Activated B cell treated with CpG ODN at 0.5 μM for 24 hours (primary cell): ENCODE measurements at regions of chr6 and their contacts with region 1.

Region 1: DNA sequence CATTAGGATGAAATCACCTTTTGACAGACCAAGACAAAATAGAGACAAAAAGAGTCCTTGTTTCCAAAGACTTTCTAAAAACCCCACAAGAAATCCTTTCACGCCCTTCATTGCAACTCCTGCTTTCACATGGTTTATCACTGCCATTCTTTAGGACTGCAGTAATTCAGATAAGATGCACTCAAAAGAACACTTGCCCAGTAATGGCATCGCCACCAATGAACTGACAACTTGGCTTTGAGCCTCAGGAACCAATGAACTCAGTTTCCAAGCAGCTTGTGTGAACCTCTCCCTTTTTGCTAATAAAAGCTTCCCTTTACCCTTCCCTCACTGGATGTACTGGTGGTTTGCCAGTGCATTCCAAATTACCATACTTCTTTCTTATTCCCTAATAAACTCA is 21.8 kb downstream of the OSTM1 start:
- DNase-seq: no peak
- ATAC-seq: no peak
- H3K4me3 Mint-ChIP-seq: no peak overlapping the region
- H3K27ac Mint-ChIP-seq: no peak overlapping the region
- H3K4me1 Mint-ChIP-seq: no peaks in the 10 kb centered on the region
- H3K27me3 Mint-ChIP-seq: no peaks in the 10 kb centered on the region
- CTCF ChIP-seq: no peak

Region 2: DNA sequence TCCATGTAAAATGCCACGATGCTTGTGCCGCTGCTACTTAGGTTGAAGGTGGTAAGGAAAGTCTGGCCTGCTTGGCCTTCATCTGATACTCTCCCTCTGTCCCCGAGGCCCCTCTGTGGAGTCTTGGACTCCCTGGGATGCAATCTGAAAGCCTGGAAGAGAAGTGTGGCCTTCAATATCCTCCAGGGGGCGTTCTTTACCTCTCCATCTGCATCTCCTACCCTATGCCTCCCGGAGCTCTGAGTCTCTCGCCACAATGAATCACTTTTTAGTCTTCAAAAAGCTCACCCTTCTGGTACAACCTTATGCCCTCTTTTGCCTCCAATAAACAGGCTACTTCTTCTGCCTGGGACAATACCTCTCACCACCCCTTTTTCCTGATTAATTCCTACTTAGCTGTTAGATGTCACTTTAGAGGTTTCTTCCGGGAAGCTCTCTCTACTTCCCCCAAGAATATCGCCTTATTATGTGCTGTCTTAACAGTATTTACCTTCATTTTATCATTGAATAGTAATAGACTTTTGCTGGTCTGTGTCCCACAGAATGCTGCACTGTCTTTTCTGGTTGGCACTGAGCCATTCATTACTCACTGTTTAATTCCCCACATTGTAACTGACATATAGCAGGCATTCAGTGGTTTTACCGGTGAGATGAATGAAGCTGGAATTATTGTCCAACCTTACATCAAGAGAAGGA is 1713.2 kb before region 1 on chr6:
- CTCF ChIA-PET with region 1: interaction called, 5 read pairs
- POLR2A ChIA-PET with region 1: no interaction called
- intact Hi-C with region 1: loop called (anchors 10 kb)
- DNase-seq: no peak
- ATAC-seq: peak; percentile 79
- H3K4me3 Mint-ChIP-seq: peak overlapping the region; percentile 59
- H3K27ac Mint-ChIP-seq: no peak overlapping the region
- H3K4me1 Mint-ChIP-seq: peaks cover 7% of the 10 kb centered on the region
- H3K27me3 Mint-ChIP-seq: peaks cover 17% of the 10 kb centered on the region
- CTCF ChIP-seq: no peak

Region 3: GRCh38 chr6:107132330-107132954 is 920.3 kb before region 1 on chr6:
- CTCF ChIA-PET with region 1: interaction called, 3 read pairs
- POLR2A ChIA-PET with region 1: no interaction called
- intact Hi-C with region 1: loop called (anchors 1 kb)
- DNase-seq: no peak
- ATAC-seq: no peak
- H3K4me3 Mint-ChIP-seq: no peak overlapping the region
- H3K27ac Mint-ChIP-seq: no peak overlapping the region
- H3K4me1 Mint-ChIP-seq: peaks cover 3% of the 10 kb centered on the region
- H3K27me3 Mint-ChIP-seq: no peaks in the 10 kb centered on the region
- CTCF ChIP-seq: no peak

Region 4: DNA sequence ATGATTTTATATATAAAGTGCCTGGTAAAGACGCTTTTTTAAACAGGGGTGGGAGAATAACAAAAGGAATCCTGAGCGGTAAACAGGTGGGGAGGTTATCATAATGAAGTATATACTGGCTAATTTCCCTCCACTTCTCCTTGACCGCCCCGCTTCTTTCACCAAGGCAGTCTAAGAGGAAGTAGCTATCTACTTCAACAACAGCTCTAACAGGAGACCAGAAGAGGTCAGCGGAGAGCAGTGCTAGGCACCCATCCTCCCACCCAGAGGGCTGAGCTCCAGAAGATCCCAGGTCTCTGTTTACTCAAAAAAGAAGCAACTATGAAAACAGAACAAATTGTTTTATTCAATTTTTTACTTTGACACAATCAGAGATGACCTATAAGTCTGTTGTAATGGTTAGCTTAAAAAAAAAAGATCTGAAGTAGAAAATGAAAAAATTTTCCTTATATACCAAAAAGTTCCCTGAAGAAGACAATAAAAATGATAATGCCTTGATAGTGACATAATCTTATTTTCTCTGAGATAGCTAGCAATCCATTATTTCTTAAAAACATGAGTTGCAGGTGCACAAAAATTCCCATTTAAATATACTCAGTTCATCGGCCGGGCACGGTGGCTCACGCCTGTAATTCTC is 734.5 kb before region 1 on chr6:
- CTCF ChIA-PET with region 1: no interaction called
- POLR2A ChIA-PET with region 1: no interaction called
- intact Hi-C with region 1: loop called (anchors 1 kb)
- DNase-seq: no peak
- ATAC-seq: peak; percentile 85
- H3K4me3 Mint-ChIP-seq: no peak overlapping the region
- H3K27ac Mint-ChIP-seq: no peak overlapping the region
- H3K4me1 Mint-ChIP-seq: peaks cover 15% of the 10 kb centered on the region
- H3K27me3 Mint-ChIP-seq: no peaks in the 10 kb centered on the region
- CTCF ChIP-seq: no peak

Region 5: GRCh38 chr6:107866606-107867301 is 186.0 kb before region 1 on chr6:
- CTCF ChIA-PET with region 1: interaction called, 3 read pairs
- POLR2A ChIA-PET with region 1: no interaction called
- intact Hi-C with region 1: loop called (anchors 10 kb)
- DNase-seq: no peak
- ATAC-seq: peak; percentile 49
- H3K4me3 Mint-ChIP-seq: peak overlapping the region; percentile 66
- H3K27ac Mint-ChIP-seq: no peak overlapping the region
- H3K4me1 Mint-ChIP-seq: peaks cover 45% of the 10 kb centered on the region
- H3K27me3 Mint-ChIP-seq: peaks cover 3% of the 10 kb centered on the region
- CTCF ChIP-seq: no peak

Region 6: DNA sequence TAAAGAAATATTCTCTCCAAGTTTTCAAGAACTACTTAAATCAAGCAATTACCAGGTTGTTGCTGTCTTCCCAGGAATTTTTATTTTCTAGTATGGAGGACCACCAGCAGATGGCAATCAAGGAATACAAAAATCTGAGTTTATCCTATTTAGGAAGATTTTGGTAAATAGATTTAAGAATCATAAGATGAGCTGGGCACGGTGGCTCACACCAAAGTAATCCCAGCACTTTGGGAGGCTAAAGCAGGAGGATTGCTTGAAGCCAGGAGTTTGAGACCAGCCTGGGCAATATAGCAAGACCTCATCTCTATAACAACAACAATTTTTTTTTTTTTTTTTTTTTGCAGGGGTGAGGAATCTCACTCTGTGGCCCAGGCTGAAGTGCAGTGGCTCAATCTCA is 75.4 kb before region 1 on chr6:
- CTCF ChIA-PET with region 1: no interaction called
- POLR2A ChIA-PET with region 1: no interaction called
- intact Hi-C with region 1: loop called (anchors 5 kb)
- DNase-seq: no peak
- ATAC-seq: no peak
- H3K4me3 Mint-ChIP-seq: no peak overlapping the region
- H3K27ac Mint-ChIP-seq: no peak overlapping the region
- H3K4me1 Mint-ChIP-seq: no peaks in the 10 kb centered on the region
- H3K27me3 Mint-ChIP-seq: peaks cover 2% of the 10 kb centered on the region
- CTCF ChIP-seq: no peak